ENCODE measurements at regions of chr6 and their contacts with region 1.

Region 1: GRCh38 chr6:44960898-44961297 is 367.2 kb upstream of the RUNX2 start:
- DNase-seq: no peak
- ATAC-seq: no peak
- H3K4me3 ChIP-seq: no peak overlapping the region
- H3K4me3 Mint-ChIP-seq: no peak overlapping the region
- H3K27ac ChIP-seq: no peak overlapping the region
- H3K27ac Mint-ChIP-seq: no peak overlapping the region
- H3K4me1 ChIP-seq: no peaks in the 10 kb centered on the region
- H3K4me1 Mint-ChIP-seq: peaks cover 0 to 8% (median 4%) of the 10 kb centered on the region in 3 donors
- H3K27me3 ChIP-seq: no peaks in the 10 kb centered on the region
- H3K27me3 Mint-ChIP-seq: no peaks in the 10 kb centered on the region

Region 2: DNA sequence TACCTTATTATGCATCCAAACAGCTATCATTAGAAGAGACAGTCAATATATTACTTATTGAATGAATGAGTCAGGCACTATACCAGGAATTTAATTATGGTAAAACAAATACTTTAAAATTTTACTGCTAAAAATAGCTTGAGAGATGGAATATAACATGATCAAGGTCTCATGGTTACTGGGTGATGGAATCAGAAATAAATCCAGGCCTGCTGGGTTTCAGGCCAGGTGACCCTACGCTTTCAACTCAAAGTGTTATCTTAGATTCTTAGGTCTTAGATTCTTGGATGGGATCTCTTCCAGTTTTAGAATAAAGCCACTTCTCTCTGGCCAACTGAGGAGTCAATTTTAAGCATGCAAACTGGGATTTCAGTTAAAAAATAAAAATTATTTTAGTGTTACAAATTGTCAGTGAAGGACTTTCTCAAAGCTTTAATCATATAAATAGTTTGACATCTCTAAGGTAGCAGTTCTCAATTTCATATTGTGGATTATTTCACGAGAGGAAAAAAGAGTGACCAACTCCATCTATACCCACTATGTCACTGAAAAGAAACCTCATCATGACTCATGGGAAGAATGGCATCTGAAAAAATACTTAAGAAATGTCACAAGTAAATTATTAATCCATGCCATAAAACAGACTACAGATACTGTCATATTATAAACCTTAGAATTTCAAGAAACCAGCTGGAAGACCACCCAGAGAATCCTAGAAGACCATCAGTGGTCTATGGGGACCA is 83.8 kb after region 1 on chr6:
- CTCF ChIA-PET with region 1: interaction called in 1 of 2 experiments, 10 read pairs
- POLR2A ChIA-PET with region 1: no interaction called
- DNase-seq: no peak
- ATAC-seq: no peak
- H3K4me3 ChIP-seq: no peak overlapping the region
- H3K4me3 Mint-ChIP-seq: no peak overlapping the region
- H3K27ac ChIP-seq: no peak overlapping the region
- H3K27ac Mint-ChIP-seq: no peak overlapping the region
- H3K4me1 ChIP-seq: peaks cover 0 to 3% of the 10 kb centered on the region in 2 experiments
- H3K4me1 Mint-ChIP-seq: peaks cover 15 to 24% (median 21%) of the 10 kb centered on the region in 3 donors
- H3K27me3 ChIP-seq: no peaks in the 10 kb centered on the region
- H3K27me3 Mint-ChIP-seq: no peaks in the 10 kb centered on the region

Region 3: DNA sequence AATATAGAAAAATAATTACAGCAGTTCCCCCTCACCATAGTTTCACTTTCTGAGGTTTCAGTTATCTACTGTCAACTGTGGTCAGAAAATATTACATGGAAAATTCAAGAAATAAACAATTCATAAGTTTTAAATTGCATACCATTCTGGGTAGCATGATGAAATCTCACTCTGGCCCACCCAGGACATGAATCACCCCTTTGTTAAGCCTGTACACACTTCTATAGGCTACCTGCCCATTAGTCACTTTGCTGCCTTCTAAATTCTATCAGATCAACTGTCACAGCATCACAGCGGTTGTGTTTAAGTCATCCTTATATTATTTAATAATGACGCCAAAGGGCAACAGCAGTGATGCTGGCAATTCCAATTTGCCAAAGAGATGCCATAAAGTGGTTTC is 226.9 kb after region 1 on chr6:
- CTCF ChIA-PET with region 1: no interaction called
- POLR2A ChIA-PET with region 1: no interaction called
- DNase-seq: no peak
- ATAC-seq: no peak
- H3K4me3 ChIP-seq: no peak overlapping the region
- H3K4me3 Mint-ChIP-seq: no peak overlapping the region
- H3K27ac ChIP-seq: no peak overlapping the region
- H3K27ac Mint-ChIP-seq: no peak overlapping the region
- H3K4me1 ChIP-seq: peaks cover 4 to 10% of the 10 kb centered on the region in 2 experiments
- H3K4me1 Mint-ChIP-seq: peaks cover 27 to 29% (median 27%) of the 10 kb centered on the region in 3 donors
- H3K27me3 ChIP-seq: no peaks in the 10 kb centered on the region
- H3K27me3 Mint-ChIP-seq: no peaks in the 10 kb centered on the region

Measured in T-cell (primary cell).